Ascending aorta (tissue), 2 donors: ENCODE measurements at regions of chr1 and their contacts with region 1.

Region 1: DNA sequence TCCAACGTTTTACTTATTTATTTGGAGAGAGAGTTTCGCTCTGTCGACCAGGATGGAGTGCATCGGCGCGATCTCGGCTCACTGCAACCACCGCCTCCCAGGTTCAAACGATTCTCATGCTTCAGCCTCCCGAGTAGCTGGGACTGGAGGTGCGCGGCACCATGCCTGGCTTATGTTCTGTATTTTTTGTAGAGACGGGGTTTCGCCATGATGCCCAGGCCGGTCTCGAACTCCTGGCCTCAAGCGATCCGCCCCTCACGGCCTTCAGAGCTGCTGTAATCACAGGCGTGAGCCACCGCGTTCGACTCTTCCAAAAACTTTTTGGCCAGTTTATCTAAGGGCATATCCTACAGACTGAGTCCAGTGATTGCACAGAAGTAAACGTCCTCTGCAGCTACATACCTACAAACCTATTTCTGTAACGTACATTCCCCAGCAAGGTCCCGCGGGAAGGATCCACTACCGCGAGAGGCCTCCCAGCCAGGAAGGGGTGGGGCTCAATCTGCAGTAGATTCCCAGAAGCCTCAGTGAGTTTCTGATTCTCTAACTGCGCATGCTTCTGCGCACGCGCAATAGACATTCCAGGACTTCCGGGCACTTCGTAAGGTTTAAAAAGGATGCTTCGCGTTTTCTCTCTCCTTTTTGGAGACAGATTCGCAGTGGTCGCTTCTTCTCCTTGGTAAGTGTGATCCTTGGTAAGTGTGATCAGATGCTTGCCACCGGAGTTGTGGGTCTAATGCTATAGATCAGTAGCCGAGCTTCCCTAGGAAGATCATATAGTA is at the start of gene RCC1:
- DNase-seq: peak; percentile 93 to 99
- H3K4me3 ChIP-seq: peak within 1 kb of the TSS; percentile 69 to 83
- H3K27ac ChIP-seq: peak within 1 kb of the TSS; percentile 77 to 92
- H3K4me1 ChIP-seq: peaks cover 16 to 41% of the 10 kb centered on the region in 2 donors
- H3K27me3 ChIP-seq: no peaks in the 10 kb centered on the region
- CTCF ChIP-seq: no peak
- total RNA-seq, gene RCC1: 70.5 TPM

Region 2: DNA sequence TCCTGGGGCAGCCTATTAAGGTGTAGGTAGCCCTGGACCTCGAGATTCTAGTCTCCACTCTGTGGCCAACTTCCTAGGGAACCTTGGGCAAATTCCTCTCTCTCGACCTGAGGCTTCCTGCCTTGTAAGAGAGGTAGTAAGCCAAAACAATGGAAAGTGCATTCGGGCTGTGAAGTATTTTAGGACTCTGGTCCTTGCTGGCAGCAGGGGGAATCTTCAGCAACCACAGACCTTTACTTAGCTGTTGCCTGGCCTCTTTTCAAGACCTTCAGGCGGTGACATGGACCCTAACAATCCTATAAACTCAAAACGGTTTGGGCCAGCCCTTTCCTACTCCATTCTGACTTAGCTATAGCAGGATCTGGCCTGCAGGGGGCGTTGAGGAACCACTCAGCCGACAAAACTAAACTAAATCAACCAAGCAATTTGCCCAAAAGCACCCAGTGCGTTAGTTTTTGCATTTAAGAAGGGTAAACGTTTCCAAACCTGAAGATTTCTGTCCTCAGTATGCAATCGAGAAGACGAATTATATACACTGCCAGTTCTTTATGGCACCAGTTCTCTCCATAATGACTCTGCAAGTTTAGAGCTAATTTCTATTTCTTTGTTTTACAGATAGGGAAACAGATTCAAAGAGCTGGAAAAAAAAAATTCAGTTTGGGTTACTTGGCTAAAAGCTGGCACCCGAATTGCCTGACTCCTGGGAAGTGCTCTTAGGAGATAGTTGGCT is 257.1 kb before region 1 on chr1:
- intact Hi-C with region 1: loop called (anchors 5 kb)
- DNase-seq: peak in 1 of 2 donors; percentile 90
- H3K4me3 ChIP-seq: peak overlapping the region; percentile 31 to 54
- H3K27ac ChIP-seq: peak overlapping the region; percentile 79 to 87
- H3K4me1 ChIP-seq: peaks cover 14 to 29% of the 10 kb centered on the region in 2 donors
- H3K27me3 ChIP-seq: no peaks in the 10 kb centered on the region
- CTCF ChIP-seq: peak; percentile 81 to 95 (median 90)

Region 3: GRCh38 chr1:28329395-28330153 is 176.0 kb before region 1 on chr1:
- intact Hi-C with region 1: loop called (anchors 5 kb)
- DNase-seq: peak in 1 of 2 donors; percentile 67
- H3K4me3 ChIP-seq: peak overlapping the region; percentile 63 to 71
- H3K27ac ChIP-seq: peak overlapping the region; percentile 75 to 82
- H3K4me1 ChIP-seq: peaks cover 2 to 10% of the 10 kb centered on the region in 2 donors
- H3K27me3 ChIP-seq: no peaks in the 10 kb centered on the region
- CTCF ChIP-seq: peak in 1 of 3 experiments; percentile 11

Region 4: DNA sequence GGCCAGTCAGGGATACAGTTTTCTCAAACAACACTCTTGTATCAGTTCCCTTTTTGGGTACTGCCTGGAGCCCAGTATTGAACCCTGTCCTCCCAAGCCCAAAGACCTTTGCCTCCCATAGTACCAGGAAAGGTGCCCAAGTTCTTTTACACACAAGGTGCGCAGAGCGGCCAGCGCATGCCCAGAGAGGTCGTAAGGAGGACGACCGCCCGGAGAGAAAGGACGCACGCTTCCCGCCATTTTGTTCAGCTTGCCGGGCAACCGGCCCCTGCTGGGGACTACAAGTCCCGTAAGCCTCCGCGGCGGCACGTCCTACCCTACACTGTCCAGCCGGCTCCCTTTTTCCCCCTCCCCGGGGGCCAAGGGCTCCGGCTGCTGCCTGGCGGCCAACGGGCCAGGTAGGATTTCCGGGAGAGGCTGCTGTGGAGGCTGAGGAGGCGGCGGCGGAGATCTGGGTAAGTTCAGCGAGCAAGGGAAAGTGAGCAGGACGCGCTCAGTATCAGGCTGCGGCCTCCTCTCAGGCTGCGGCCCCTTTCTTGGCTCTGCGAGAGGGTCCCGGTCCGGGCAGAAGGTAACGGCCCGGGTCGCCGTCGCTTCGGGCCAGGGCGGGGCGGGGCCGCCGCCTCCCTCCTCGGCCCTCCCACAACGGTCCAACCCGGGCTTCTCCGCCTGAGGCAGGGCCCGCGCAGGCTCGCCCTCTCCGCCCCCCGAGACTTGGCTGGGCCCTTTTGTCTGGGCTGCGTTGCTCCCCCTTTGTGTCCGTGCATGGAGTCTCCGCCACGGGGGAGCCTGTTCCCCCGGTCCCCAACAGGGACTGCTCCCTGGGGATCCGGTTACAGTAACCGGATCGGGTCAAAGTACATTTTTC is 136.0 kb before region 1 on chr1 and contains the start of gene PHACTR4:
- intact Hi-C with region 1: loop called (anchors 2 kb)
- DNase-seq: peak; percentile 59 to 94
- H3K4me3 ChIP-seq: peak within 1 kb of the TSS; percentile 86 to 89
- H3K27ac ChIP-seq: peak within 1 kb of the TSS; percentile 92 to 94
- H3K4me1 ChIP-seq: peaks cover 8 to 17% of the 10 kb centered on the region in 2 donors
- H3K27me3 ChIP-seq: no peaks in the 10 kb centered on the region
- CTCF ChIP-seq: no peak
- total RNA-seq, gene PHACTR4: 33.0 TPM

Region 5: DNA sequence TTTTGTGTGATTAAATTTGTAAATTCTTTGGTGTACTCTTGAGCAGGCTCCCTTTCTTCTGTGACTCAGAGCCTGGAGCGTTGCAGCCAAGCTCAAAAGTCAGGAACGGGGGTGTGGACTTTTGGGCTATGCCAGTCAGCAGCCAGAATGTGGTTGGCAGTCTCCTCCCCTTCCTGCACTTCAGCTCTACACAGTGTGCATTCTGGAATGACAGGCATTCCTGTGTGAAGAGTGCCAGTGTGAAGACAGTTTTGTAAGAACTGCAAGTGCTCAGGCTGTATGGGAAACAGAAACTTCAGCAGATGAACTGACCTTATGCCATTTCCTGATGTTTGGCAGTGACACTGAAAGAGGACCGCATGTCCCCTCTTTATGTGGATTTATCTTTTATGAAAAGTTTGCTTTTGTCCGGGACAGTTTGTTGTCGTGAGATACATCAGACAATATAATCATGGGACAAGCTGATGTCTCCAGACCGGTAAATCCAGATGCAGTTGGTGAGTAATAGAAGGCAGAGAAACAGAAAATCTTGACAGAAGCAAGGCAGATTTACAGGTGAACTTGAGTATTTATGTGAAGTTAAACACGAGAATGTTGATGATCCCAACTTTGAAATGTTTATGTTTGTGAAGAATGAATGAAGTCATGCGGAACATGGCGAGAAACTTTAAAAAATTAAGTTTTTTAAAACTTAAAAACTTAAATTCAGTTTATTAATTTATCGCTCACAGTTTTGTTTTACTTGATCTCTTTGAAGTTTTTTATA is 67.5 kb before region 1 on chr1:
- intact Hi-C with region 1: loop called (anchors 5 kb)
- DNase-seq: peak; percentile 59 to 93
- H3K4me3 ChIP-seq: peak overlapping the region; percentile 29 to 48
- H3K27ac ChIP-seq: peak overlapping the region; percentile 81 to 85
- H3K4me1 ChIP-seq: peaks cover 11% of the 10 kb centered on the region in 2 donors
- H3K27me3 ChIP-seq: no peaks in the 10 kb centered on the region
- CTCF ChIP-seq: no peak

Region 6: DNA sequence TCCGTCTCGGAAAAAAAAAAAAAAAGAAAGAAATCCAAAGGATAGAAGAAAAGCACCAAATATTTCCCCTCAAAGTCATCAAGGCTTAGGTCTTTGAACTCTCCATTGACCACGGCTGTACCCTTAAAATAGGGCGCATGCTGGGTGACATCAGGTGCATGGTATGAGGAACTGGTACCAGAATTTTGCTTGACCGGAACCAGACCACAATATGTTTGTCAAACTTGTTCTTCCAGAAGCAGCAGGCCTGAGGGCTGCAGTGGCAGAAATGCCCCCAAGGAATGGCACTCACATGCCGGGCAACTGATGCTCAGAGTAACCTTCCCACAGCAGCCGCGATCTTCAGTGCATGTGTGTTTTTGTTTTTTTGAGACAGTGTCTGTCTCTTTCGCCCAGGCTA is 21.3 kb after region 1 on chr1:
- intact Hi-C with region 1: no loop called
- DNase-seq: no peak
- H3K4me3 ChIP-seq: no peak overlapping the region
- H3K27ac ChIP-seq: no peak overlapping the region
- H3K4me1 ChIP-seq: no peaks in the 10 kb centered on the region
- H3K27me3 ChIP-seq: no peaks in the 10 kb centered on the region
- CTCF ChIP-seq: no peak

Region 7: GRCh38 chr1:28581536-28582247 is 76.1 kb after region 1 on chr1:
- intact Hi-C with region 1: loop called (anchors 1 kb)
- DNase-seq: peak; percentile 85 to 97
- H3K4me3 ChIP-seq: peak overlapping the region; percentile 77 to 86
- H3K27ac ChIP-seq: peak overlapping the region; percentile 91 to 92
- H3K4me1 ChIP-seq: peaks cover 8 to 14% of the 10 kb centered on the region in 2 donors
- H3K27me3 ChIP-seq: no peaks in the 10 kb centered on the region
- CTCF ChIP-seq: peak in 1 of 3 experiments; percentile 35

Region 8: DNA sequence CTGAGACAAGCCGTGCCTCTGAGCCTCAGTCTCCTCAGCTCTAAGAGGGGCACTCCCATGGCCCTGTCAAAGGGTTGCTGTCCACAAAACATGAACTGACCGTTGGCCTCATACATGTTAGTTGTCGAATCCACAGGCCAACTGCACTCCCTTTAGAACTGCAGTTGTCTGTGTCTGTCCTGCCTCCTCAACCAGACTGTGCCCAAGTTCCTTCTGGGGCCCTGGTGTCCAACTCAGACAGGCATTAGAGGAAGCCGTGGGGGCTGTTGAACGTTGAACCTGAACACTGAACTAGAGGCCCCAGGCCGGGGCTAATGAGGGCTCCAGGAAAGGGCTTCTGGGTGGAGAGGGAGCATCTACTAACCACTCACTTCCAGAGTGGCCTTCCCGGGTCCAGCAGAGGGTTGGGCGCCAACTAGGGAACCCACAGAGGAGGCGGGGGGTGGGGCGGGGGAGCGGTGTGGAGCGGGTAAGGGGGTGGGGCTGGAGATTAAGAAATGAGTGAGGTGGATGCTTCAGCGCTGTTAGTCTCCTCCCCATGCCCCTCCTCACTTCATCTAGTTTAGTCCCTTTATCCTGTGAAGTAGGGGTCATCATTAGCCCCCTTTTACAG is 86.2 kb after region 1 on chr1 and contains the start of gene RAB42:
- intact Hi-C with region 1: no loop called
- DNase-seq: peak in 1 of 2 donors; percentile 70
- H3K4me3 ChIP-seq: peak within 1 kb of the TSS; percentile 68 to 76
- H3K27ac ChIP-seq: no peak within 1 kb of the TSS
- H3K4me1 ChIP-seq: peaks cover 0 to 6% of the 10 kb centered on the region in 2 donors
- H3K27me3 ChIP-seq: no peaks in the 10 kb centered on the region
- CTCF ChIP-seq: no peak
- total RNA-seq, gene RAB42: not detected

Region 9: DNA sequence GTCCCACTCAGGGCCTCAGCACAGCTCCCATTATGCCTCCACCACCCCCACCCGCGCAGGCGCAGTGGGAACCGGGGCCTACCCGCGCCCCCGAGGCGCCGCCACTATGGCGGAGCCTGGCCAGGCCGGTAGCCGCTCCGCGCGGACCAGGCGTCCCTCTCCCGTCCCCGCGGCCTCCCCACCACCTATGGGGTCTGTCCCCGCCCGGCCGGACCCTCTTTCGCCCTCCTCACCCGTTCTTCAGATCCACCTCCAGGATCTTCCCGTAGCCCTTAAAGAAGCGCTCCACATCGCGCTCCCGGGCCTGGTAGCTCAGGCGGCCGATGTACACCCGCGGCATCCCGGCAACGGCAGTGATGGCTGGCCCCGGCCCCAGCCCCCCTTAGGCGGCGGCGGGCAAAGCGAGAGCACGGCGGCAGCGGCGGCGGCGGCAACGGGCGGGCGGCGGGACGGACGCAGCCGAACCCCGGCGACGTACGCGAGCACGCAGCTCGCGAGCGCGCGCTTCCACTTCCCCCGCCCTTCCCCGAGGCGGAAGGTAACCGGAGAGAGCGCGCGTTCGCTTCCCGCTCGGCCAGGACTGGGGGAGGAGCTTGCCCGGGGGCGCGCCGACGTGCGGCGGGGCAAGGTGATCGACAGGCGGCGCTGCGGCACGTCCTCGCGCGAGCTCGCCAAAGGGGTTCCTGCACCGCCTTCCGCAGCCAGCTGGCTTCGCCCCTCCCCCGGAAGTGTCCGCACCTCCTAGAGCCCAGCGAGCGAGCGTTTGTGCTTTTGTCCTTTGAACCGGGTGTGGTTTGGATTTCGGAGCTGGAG is 676.0 kb after region 1 on chr1 and contains the start of gene SRSF4:
- intact Hi-C with region 1: loop called (anchors 5 kb)
- DNase-seq: peak; percentile 92 to 99
- H3K4me3 ChIP-seq: peak within 1 kb of the TSS; percentile 95 to 99
- H3K27ac ChIP-seq: peak within 1 kb of the TSS; percentile 100
- H3K4me1 ChIP-seq: peaks cover 18 to 30% of the 10 kb centered on the region in 2 donors
- H3K27me3 ChIP-seq: no peaks in the 10 kb centered on the region
- CTCF ChIP-seq: peak; percentile 73 to 79 (median 75)
- total RNA-seq, gene SRSF4: 49.1 TPM